Activated naive CD4-positive, alpha-beta T cell treated with anti-CD3 and anti-CD28 coated beads for 36 hours (primary cell): ENCODE measurements at regions of chr19 and their contacts with region 1.

Region 1: DNA sequence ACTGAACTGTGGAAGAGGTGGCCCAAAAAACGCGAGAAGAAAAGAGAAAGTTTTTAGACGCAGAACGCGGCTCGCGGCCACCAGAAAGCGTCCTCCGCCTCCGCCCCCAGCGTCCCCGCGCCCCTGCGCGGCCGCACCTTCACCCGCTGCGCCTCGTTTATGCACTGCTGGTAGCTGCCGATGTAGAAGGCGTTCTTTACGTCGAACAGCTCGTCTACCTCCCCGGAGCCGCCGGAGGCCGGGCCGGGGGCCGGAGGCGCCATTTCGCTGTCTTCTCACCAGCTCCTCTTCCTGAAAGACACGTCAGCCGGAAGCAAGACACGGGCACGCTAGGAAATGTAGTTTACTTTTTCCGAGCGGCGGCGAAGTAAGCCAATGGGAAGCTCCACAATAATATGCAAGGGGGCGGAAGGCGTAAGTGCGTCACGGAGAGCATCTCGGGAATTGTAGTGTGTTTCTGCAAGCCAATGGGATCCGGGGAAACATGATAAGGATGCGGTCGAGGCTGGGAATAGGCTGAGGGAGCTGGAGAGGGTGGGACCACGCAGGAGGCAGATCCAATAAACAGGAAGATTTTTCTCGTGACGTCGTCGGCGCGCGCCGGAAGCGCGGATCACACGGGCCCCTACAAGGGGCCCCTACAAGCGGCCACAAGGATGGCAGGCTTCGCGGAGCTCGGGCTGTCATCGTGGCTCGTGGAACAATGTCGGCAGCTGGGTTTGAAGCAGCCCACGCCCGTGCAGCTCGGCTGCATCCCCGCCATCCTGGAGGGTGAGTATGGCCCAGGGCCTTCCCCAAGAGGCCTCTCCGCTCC is at the starts of genes COPE and DDX49:
- DNase-seq: peak; percentile 99
- H3K4me3 Mint-ChIP-seq: peak within 1 kb of the TSS; percentile 94
- H3K27ac Mint-ChIP-seq: peak within 1 kb of the TSS; percentile 88
- H3K4me1 Mint-ChIP-seq: peaks cover 46% of the 10 kb centered on the region
- H3K27me3 Mint-ChIP-seq: no peaks in the 10 kb centered on the region
- total RNA-seq, gene COPE: 199 to 200 TPM
- total RNA-seq, gene DDX49: 48.3 to 50.1 TPM

Region 2: GRCh38 chr19:18478569-18479311 is 440.6 kb before region 1 on chr19:
- CTCF ChIA-PET with region 1: no interaction called
- intact Hi-C with region 1: loop called (anchors 5 kb)
- DNase-seq: peak; percentile 93
- H3K4me3 Mint-ChIP-seq: peak overlapping the region; percentile 38
- H3K27ac Mint-ChIP-seq: peak overlapping the region; percentile 87
- H3K4me1 Mint-ChIP-seq: peaks cover 65% of the 10 kb centered on the region
- H3K27me3 Mint-ChIP-seq: no peaks in the 10 kb centered on the region

Region 3: DNA sequence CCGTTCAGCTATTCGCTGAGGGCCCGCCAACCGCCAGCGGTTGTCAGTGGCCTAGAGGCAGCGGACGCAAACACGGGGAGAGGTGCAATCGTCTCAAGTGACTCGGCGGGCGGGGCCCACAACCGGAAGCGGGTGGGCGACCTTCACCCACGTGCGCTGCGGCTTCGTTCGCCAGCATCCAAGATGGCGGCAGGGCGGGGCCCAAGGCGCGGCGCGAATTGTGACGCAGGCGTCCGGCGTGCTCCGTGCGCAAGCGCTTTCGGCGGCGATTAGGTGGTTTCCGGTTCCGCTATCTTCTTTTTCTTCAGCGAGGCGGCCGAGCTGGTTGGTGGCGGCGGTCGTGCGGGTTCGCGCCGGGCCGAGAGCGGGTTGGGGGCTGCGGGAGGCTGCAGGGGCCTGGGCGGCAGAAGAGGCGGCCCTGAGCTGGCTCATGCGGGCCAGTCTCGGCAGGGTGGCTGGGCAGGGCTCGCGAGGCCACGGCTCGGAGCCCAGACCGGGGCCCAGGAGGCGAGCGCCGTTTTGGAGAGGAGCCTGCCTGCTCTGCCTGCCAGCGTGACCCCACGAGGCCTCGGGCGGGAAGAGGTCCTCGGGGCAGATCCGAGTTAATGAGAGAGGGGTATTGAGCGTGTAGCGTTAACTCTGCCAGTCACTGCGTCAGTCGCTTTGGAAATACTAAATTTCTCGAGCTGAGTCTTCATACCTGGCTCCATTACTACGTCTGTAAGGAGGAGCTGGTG is 347.6 kb before region 1 on chr19 and contains the start of gene UBA52:
- CTCF ChIA-PET with region 1: no interaction called
- intact Hi-C with region 1: loop called (anchors 1 kb)
- DNase-seq: peak; percentile 99
- H3K4me3 Mint-ChIP-seq: peak within 1 kb of the TSS; percentile 90
- H3K27ac Mint-ChIP-seq: peak within 1 kb of the TSS; percentile 93
- H3K4me1 Mint-ChIP-seq: peaks cover 30% of the 10 kb centered on the region
- H3K27me3 Mint-ChIP-seq: no peaks in the 10 kb centered on the region
- total RNA-seq, gene UBA52: 1,997 to 2,122 TPM

Region 4: GRCh38 chr19:18771328-18772242 is 147.7 kb before region 1 on chr19:
- CTCF ChIA-PET with region 1: no interaction called
- intact Hi-C with region 1: no loop called
- DNase-seq: peak; percentile 18
- H3K4me3 Mint-ChIP-seq: no peak overlapping the region
- H3K27ac Mint-ChIP-seq: no peak overlapping the region
- H3K4me1 Mint-ChIP-seq: no peaks in the 10 kb centered on the region
- H3K27me3 Mint-ChIP-seq: no peaks in the 10 kb centered on the region

Region 5: DNA sequence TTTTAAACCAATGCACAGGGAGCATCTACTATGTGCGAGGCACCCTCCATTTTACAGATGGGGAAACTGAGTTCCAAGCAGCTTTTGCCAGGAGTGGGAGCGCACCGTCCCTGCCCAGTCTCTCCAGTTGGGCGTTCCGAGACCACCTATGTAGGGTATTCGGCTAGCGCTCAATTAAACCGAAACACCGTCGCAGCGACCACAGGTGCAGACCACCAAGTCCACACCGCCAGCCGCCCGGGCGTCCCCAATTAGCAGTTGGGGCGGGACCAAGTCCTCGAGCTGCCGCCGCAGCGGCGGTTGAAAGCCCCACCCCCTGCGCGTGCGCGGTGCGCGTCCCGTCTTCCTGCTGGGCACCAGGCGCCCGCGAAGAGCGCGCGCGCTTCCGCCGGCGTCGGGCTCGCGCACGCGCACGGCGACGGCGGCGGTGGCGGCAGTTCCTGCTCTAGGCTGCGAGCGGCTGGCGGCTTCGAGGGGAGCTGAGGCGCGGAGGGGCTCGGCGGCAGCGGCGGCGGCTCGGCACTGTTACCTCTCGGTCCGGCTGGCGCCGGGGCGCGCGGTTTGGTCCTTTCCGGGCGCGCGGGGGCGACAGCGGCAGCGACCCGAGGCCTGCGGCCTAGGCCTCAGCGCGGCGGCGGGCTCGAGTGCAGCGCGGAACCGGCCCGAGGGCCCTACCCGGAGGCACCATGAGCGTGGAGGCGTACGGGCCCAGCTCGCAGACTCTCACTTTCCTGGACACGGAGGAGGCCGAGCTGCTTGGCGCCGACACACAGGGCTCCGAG is 87.6 kb before region 1 on chr19 and contains the start of gene UPF1:
- CTCF ChIA-PET with region 1: no interaction called
- intact Hi-C with region 1: loop called (anchors 2 kb)
- DNase-seq: peak; percentile 96
- H3K4me3 Mint-ChIP-seq: peak within 1 kb of the TSS; percentile 97
- H3K27ac Mint-ChIP-seq: peak within 1 kb of the TSS; percentile 86
- H3K4me1 Mint-ChIP-seq: peaks cover 34% of the 10 kb centered on the region
- H3K27me3 Mint-ChIP-seq: no peaks in the 10 kb centered on the region
- total RNA-seq, gene UPF1: 95.0 to 105 TPM

Region 6: DNA sequence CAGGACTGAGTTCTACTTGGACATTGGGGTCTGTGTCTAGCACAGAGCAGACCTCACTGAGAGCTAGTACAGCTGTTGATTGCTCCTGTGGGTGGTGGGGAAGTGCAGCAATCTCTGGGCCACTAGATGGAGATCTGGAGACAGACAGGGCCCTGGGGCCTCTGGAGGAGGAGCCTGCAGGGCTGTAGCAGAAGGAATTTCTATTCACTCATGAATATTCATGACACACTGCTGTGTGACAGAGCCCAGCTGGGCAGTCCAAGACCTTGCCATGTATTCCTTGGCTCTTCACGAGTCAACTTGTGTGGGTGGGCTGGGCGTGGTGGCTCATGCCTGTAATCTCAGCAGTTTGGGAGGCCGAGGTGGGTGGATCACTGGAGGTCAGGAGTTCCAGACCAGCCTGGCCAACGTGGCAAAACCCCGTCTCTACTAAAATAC is 76.5 kb after region 1 on chr19:
- CTCF ChIA-PET with region 1: no interaction called
- intact Hi-C with region 1: no loop called
- DNase-seq: peak; percentile 19
- H3K4me3 Mint-ChIP-seq: no peak overlapping the region
- H3K27ac Mint-ChIP-seq: no peak overlapping the region
- H3K4me1 Mint-ChIP-seq: peaks cover 11% of the 10 kb centered on the region
- H3K27me3 Mint-ChIP-seq: no peaks in the 10 kb centered on the region

Region 7: GRCh38 chr19:19033426-19034203 is 114.3 kb after region 1 on chr19 and contains the starts of genes ARMC6 and SUGP2:
- CTCF ChIA-PET with region 1: no interaction called
- intact Hi-C with region 1: loop called (anchors 1 kb)
- DNase-seq: peak; percentile 85
- H3K4me3 Mint-ChIP-seq: peak within 1 kb of the TSS; percentile 95
- H3K27ac Mint-ChIP-seq: peak within 1 kb of the TSS; percentile 86
- H3K4me1 Mint-ChIP-seq: peaks cover 37% of the 10 kb centered on the region
- H3K27me3 Mint-ChIP-seq: no peaks in the 10 kb centered on the region
- total RNA-seq, gene ARMC6: 24.2 to 24.6 TPM
- total RNA-seq, gene SUGP2: 149 to 154 TPM

Region 8: GRCh38 chr19:19192078-19192882 is 273.0 kb after region 1 on chr19 and contains the starts of genes BORCS8 and RFXANK:
- CTCF ChIA-PET with region 1: no interaction called
- intact Hi-C with region 1: loop called (anchors 1 kb)
- DNase-seq: peak; percentile 100
- H3K4me3 Mint-ChIP-seq: peak within 1 kb of the TSS; percentile 93
- H3K27ac Mint-ChIP-seq: peak within 1 kb of the TSS; percentile 96
- H3K4me1 Mint-ChIP-seq: peaks cover 49% of the 10 kb centered on the region
- H3K27me3 Mint-ChIP-seq: no peaks in the 10 kb centered on the region
- total RNA-seq, gene BORCS8: 14.0 to 16.1 TPM
- total RNA-seq, gene RFXANK: 48.4 to 49.3 TPM